ENCODE measurements at regions of chr5 and their contacts with region 1.

Region 1: GRCh38 chr5:148826053-148826738 is at the start of gene ADRB2:
- DNase-seq: peak; percentile 87 to 93 (median 88)
- H3K4me3 ChIP-seq: peak within 1 kb of the TSS; percentile 72 to 92
- H3K4me3 Mint-ChIP-seq: peak within 1 kb of the TSS; percentile 86 to 95 (median 90)
- H3K27ac ChIP-seq: peak within 1 kb of the TSS; percentile 67
- H3K27ac Mint-ChIP-seq: peak within 1 kb of the TSS; percentile 79 to 97 (median 93)
- H3K4me1 ChIP-seq: peaks cover 39% of the 10 kb centered on the region
- H3K4me1 Mint-ChIP-seq: peaks cover 19 to 61% (median 35%) of the 10 kb centered on the region in 4 donors
- H3K27me3 ChIP-seq: no peaks in the 10 kb centered on the region
- H3K27me3 Mint-ChIP-seq: no peaks in the 10 kb centered on the region
- total RNA-seq, gene ADRB2: 5.6 to 6.1 TPM

Region 2: DNA sequence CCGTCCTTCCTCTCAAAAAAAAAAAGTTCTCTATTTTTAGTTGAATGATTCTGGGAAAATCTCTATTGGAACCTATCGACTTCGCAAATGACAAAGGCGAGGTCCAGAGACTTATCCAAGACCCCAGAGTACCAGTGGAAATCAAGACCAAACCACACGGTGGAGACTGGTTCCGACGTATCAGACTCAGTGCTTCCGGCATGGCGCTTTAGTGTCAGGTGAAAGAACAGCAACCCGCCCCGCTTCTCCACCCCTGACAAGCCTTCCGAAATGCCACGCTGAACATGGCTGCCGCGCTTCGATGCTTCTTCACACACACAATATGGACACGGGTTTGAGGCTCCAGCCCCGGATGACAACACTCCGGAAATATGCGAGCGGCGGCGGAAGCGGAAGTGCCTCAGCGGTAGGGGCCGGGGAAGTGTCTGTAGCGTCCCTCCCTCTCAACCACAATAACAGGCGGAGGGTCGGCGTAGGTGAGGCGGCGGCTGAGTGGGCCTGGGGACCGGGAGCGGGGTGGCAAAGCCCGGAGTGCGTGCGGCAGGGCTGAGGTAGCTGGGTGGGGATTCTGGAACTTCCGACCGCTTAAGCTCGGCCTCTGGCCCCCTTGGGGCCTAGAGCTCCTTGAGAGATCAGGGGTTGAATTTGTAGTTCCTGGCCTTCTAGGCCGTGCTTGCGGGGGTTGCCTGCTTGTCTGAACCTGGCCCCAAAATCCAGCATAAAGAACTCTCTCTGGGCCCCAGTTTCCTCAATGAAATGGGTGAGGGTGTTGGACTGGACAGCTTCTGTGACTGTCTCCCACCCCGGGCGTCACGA is 442.4 kb before region 1 on chr5 and contains the start of gene FBXO38:
- CTCF ChIA-PET with region 1: no interaction called
- POLR2A ChIA-PET with region 1: no interaction called
- intact Hi-C with region 1: loop called (anchors 1 kb)
- DNase-seq: peak; percentile 97 to 99 (median 97)
- H3K4me3 ChIP-seq: peak within 1 kb of the TSS; percentile 82 to 86
- H3K4me3 Mint-ChIP-seq: peak within 1 kb of the TSS; percentile 86 to 97 (median 92)
- H3K27ac ChIP-seq: peak within 1 kb of the TSS; percentile 93
- H3K27ac Mint-ChIP-seq: peak within 1 kb of the TSS; percentile 90 to 100 (median 99)
- H3K4me1 ChIP-seq: peaks cover 47% of the 10 kb centered on the region
- H3K4me1 Mint-ChIP-seq: peaks cover 42 to 71% (median 59%) of the 10 kb centered on the region in 4 donors
- H3K27me3 ChIP-seq: no peaks in the 10 kb centered on the region
- H3K27me3 Mint-ChIP-seq: no peaks in the 10 kb centered on the region
- total RNA-seq, gene FBXO38: 77.3 to 78.3 TPM

Region 3: DNA sequence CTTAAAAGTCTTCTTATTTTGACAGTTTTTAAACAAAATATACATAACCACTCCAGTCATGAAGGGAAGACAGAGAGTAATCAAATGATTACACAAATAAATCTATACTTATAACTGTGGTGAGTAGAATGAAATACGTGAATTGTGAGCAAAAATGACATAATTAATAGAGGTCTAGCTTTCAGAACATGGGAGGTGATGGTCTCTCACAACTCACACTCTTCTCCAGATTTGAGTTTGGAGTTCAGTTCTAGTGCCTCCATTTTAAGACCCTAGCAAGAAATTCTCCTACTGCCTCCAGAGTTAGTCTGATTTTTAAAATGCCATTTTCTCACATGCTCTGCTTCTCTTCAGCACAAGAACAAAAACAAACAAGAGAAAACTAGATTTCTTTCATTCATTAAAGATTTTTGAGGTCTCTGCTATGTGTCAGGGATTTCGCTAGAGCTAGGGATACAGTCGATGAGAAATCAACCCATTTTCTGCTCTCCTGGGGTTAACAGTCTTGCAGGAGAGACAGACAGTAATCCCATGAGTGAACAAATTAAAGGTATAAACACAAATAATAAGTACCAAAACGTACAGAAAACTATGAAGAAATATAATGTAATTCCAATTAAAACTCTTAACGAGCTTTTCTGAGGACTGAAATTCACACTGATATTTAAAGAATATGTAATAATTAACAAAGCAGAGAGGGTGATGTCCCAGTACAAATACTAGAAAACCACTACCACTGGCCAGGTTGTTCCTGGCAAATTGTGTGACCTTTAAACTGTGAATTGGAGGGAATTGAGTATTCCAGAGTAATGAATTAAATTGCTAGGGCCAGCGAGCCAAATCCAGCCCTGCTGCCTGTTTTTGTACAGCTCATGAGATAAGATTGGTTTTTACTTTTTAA is 144.8 kb before region 1 on chr5:
- CTCF ChIA-PET with region 1: no interaction called
- POLR2A ChIA-PET with region 1: no interaction called
- intact Hi-C with region 1: no loop called
- DNase-seq: no peak
- H3K4me3 ChIP-seq: no peak overlapping the region
- H3K4me3 Mint-ChIP-seq: no peak overlapping the region
- H3K27ac ChIP-seq: no peak overlapping the region
- H3K27ac Mint-ChIP-seq: no peak overlapping the region
- H3K4me1 ChIP-seq: no peaks in the 10 kb centered on the region
- H3K4me1 Mint-ChIP-seq: no peaks in the 10 kb centered on the region
- H3K27me3 ChIP-seq: peaks cover 5% of the 10 kb centered on the region
- H3K27me3 Mint-ChIP-seq: peaks cover 2 to 5% of the 10 kb centered on the region in 2 donors

Region 4: GRCh38 chr5:148805326-148806290 is 20.6 kb before region 1 on chr5:
- CTCF ChIA-PET with region 1: interaction called, 18 read pairs
- POLR2A ChIA-PET with region 1: interaction called, 28 read pairs
- intact Hi-C with region 1: loop called (anchors 1 kb)
- DNase-seq: no peak
- H3K4me3 ChIP-seq: no peak overlapping the region
- H3K4me3 Mint-ChIP-seq: peak overlapping the region in 1 of 8 donors; percentile 51
- H3K27ac ChIP-seq: no peak overlapping the region
- H3K27ac Mint-ChIP-seq: peak overlapping the region in 2 of 7 donors; percentile 23 to 43
- H3K4me1 ChIP-seq: peaks cover 24% of the 10 kb centered on the region
- H3K4me1 Mint-ChIP-seq: peaks cover 17 to 33% (median 25%) of the 10 kb centered on the region in 4 donors
- H3K27me3 ChIP-seq: no peaks in the 10 kb centered on the region
- H3K27me3 Mint-ChIP-seq: peaks cover 4 to 12% of the 10 kb centered on the region in 2 donors

Region 5: GRCh38 chr5:148849461-148849860 is 23.3 kb after region 1 on chr5:
- CTCF ChIA-PET with region 1: interaction called, 15 read pairs
- POLR2A ChIA-PET with region 1: interaction called, 73 read pairs
- intact Hi-C with region 1: loop called (anchors 1 kb)
- DNase-seq: peak; percentile 49 to 71 (median 60)
- H3K4me3 ChIP-seq: no peak overlapping the region
- H3K4me3 Mint-ChIP-seq: peak overlapping the region in 7 of 8 donors; percentile 1 to 87 (median 64)
- H3K27ac ChIP-seq: peak overlapping the region; percentile 30
- H3K27ac Mint-ChIP-seq: peak overlapping the region; percentile 6 to 98 (median 92)
- H3K4me1 ChIP-seq: peaks cover 84% of the 10 kb centered on the region
- H3K4me1 Mint-ChIP-seq: peaks cover 55 to 91% (median 68%) of the 10 kb centered on the region in 4 donors
- H3K27me3 ChIP-seq: no peaks in the 10 kb centered on the region
- H3K27me3 Mint-ChIP-seq: no peaks in the 10 kb centered on the region

Region 6: DNA sequence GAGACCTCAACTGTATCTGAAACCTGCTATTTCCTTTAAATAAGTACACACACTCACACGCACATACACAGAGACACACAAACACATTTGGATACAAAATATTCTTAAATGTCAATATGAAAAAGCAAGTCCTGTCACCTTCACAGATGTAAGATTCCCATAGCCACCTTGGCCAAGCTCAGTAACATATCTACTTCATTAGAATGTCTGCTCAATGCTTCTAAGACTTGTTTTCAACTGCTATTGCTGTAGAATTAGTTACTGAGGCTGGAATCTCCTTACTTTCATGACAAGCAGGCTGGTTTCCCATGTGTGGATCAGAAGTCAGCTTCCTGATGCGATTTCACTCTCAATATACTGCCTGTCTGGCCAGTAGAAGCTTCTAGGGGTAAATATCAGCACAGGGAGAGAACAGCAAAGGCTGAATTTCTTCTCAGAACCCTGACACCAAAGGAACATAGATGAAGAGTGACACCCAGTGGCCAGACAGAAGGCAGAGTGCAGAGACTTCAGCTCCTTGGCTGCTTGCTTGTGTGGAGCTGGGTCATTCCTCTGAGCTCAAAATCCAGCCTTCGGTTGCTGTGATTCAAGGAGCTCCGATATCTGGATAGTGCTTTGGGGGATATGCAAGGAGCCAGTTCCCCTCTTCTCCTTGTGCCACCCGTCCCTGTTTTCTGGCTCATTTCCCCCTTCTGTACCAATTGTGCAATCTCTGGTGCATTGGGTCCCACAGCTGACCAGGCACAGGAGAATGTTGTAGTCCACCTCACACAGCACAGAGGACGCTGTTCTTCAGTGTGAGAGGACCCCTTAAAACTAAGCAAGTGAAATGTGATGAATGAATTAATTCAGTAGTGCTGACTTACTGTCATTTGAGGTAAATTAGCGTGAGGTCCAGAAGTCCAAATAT is 288.5 kb after region 1 on chr5:
- CTCF ChIA-PET with region 1: no interaction called
- POLR2A ChIA-PET with region 1: no interaction called
- intact Hi-C with region 1: loop called (anchors 10 kb)
- DNase-seq: peak; percentile 35 to 56 (median 43)
- H3K4me3 ChIP-seq: no peak overlapping the region
- H3K4me3 Mint-ChIP-seq: no peak overlapping the region
- H3K27ac ChIP-seq: no peak overlapping the region
- H3K27ac Mint-ChIP-seq: no peak overlapping the region
- H3K4me1 ChIP-seq: no peaks in the 10 kb centered on the region
- H3K4me1 Mint-ChIP-seq: no peaks in the 10 kb centered on the region
- H3K27me3 ChIP-seq: no peaks in the 10 kb centered on the region
- H3K27me3 Mint-ChIP-seq: peaks cover 13 to 14% of the 10 kb centered on the region in 2 donors

Region 7: GRCh38 chr5:149357370-149358293 is 531.4 kb after region 1 on chr5 and contains the start of gene PCYOX1L:
- CTCF ChIA-PET with region 1: no interaction called
- POLR2A ChIA-PET with region 1: no interaction called
- intact Hi-C with region 1: loop called (anchors 5 kb)
- DNase-seq: peak; percentile 91 to 97 (median 95)
- H3K4me3 ChIP-seq: peak within 1 kb of the TSS; percentile 70 to 82
- H3K4me3 Mint-ChIP-seq: peak within 1 kb of the TSS; percentile 94 to 98 (median 95)
- H3K27ac ChIP-seq: peak within 1 kb of the TSS; percentile 75
- H3K27ac Mint-ChIP-seq: peak within 1 kb of the TSS; percentile 92 to 98 (median 96)
- H3K4me1 ChIP-seq: peaks cover 71% of the 10 kb centered on the region
- H3K4me1 Mint-ChIP-seq: peaks cover 46 to 83% (median 63%) of the 10 kb centered on the region in 4 donors
- H3K27me3 ChIP-seq: no peaks in the 10 kb centered on the region
- H3K27me3 Mint-ChIP-seq: no peaks in the 10 kb centered on the region
- total RNA-seq, gene PCYOX1L: 40.4 to 43.9 TPM

Measured in CD4-positive, alpha-beta memory T cell (primary cell).